Activated naive CD4-positive, alpha-beta T cell treated with anti-CD3 and anti-CD28 coated beads for 36 hours (primary cell): ENCODE measurements at regions of chr7 and their contacts with region 1.

Region 1: DNA sequence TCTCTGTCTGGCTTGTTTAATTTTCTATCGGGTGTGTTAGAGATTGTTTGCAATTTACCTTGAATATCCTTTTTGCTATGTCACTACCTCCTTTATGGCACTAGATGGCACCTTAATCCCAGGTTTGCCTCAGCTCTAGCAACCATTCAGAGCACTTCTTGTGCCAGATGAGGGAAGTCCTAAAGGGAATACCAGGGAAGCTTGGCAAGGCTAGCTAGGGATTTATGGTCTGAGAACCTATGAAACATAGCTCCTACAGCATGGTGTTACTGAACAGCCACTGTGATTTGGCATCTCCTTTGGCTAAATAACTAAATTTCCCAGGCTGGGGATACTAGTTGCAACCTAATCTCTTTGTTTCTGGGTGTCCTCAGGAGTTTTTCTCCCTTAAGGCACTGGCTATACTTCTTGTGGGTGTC is 69.0 kb upstream of the VOPP1 start:
- DNase-seq: peak; percentile 46
- H3K4me3 Mint-ChIP-seq: no peak overlapping the region
- H3K27ac Mint-ChIP-seq: no peak overlapping the region
- H3K4me1 Mint-ChIP-seq: peaks cover 7% of the 10 kb centered on the region
- H3K27me3 Mint-ChIP-seq: no peaks in the 10 kb centered on the region

Region 2: GRCh38 chr7:55733241-55734140 is 92.2 kb after region 1 on chr7:
- CTCF ChIA-PET with region 1: interaction called, 3 read pairs
- intact Hi-C with region 1: loop called (anchors 5 kb)
- DNase-seq: no peak
- H3K4me3 Mint-ChIP-seq: no peak overlapping the region
- H3K27ac Mint-ChIP-seq: no peak overlapping the region
- H3K4me1 Mint-ChIP-seq: no peaks in the 10 kb centered on the region
- H3K27me3 Mint-ChIP-seq: no peaks in the 10 kb centered on the region

Region 3: GRCh38 chr7:55887821-55888247 is 246.6 kb after region 1 on chr7:
- CTCF ChIA-PET with region 1: no interaction called
- intact Hi-C with region 1: loop called (anchors 5 kb)
- DNase-seq: no peak
- H3K4me3 Mint-ChIP-seq: peak overlapping the region; percentile 72
- H3K27ac Mint-ChIP-seq: peak overlapping the region; percentile 59
- H3K4me1 Mint-ChIP-seq: peaks cover 5% of the 10 kb centered on the region
- H3K27me3 Mint-ChIP-seq: no peaks in the 10 kb centered on the region

Region 4: GRCh38 chr7:55964261-55965099 is 323.2 kb after region 1 on chr7 and contains the start of gene NIPSNAP2:
- CTCF ChIA-PET with region 1: interaction called, 12 read pairs
- intact Hi-C with region 1: loop called (anchors 1 kb)
- DNase-seq: peak; percentile 46
- H3K4me3 Mint-ChIP-seq: peak within 1 kb of the TSS; percentile 77
- H3K27ac Mint-ChIP-seq: peak within 1 kb of the TSS; percentile 79
- H3K4me1 Mint-ChIP-seq: peaks cover 36% of the 10 kb centered on the region
- H3K27me3 Mint-ChIP-seq: no peaks in the 10 kb centered on the region
- total RNA-seq, gene NIPSNAP2: 57.3 to 57.6 TPM

Region 5: DNA sequence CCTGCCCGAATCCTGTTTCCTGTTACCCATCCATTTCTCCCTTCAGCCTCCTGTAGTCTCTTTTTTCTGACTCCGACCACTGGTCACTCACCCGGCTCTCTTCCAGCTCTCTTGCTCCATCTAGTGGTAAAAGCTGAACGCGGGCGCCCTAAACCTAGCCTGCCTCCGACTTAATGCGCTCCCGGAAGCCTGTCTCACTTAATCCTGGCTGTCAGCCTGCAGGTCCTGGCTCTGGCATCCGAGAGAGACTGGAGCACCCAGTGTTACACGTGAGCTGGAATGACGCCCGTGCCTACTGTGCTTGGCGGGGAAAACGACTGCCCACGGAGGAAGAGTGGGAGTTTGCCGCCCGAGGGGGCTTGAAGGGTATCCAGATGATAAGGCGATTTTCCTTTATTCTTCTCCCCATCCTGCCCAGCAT is 433.1 kb after region 1 on chr7:
- CTCF ChIA-PET with region 1: interaction called, 13 read pairs
- intact Hi-C with region 1: loop called (anchors 1 kb)
- DNase-seq: peak; percentile 72
- H3K4me3 Mint-ChIP-seq: no peak overlapping the region
- H3K27ac Mint-ChIP-seq: peak overlapping the region; percentile 3
- H3K4me1 Mint-ChIP-seq: peaks cover 6% of the 10 kb centered on the region
- H3K27me3 Mint-ChIP-seq: no peaks in the 10 kb centered on the region

Region 6: GRCh38 chr7:56106108-56107073 is 465.1 kb after region 1 on chr7 and contains the start of gene CHCHD2:
- CTCF ChIA-PET with region 1: no interaction called
- intact Hi-C with region 1: loop called (anchors 10 kb)
- DNase-seq: peak; percentile 97
- H3K4me3 Mint-ChIP-seq: peak within 1 kb of the TSS; percentile 90
- H3K27ac Mint-ChIP-seq: peak within 1 kb of the TSS; percentile 98
- H3K4me1 Mint-ChIP-seq: peaks cover 31% of the 10 kb centered on the region
- H3K27me3 Mint-ChIP-seq: no peaks in the 10 kb centered on the region
- total RNA-seq, gene CHCHD2: 793 TPM